Right ventricle myocardium inferior (tissue), 1 donor: ENCODE measurements at regions of chr4 and their contacts with region 1.

Region 1: GRCh38 chr4:148857239-148857972 is 415.2 kb upstream of the NR3C2 start:
- DNase-seq: no peak
- ATAC-seq: no peak

Region 2: DNA sequence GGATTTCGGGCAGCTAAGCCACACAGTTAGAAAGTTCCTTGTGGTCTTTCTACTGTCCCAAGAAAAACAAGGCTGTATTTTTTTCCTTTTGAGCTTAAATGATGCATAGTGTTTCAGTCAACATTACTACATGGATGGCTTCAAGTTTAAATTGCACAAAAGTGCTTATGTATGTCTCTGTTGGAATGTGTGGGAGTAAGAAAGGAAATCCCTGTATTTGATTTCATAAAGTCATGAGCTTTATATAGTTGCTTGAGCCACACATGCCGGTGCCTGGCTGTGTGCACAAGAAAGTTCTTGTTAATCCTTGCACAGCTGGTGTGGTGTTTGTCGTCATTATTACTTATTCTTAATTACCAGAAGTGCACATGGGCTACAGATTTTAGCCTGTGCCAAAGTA is 863.3 kb before region 1 on chr4:
- intact Hi-C with region 1: no loop called
- DNase-seq: no peak
- ATAC-seq: no peak

Region 3: GRCh38 chr4:148288448-148288847 is 569.0 kb before region 1 on chr4:
- intact Hi-C with region 1: loop called (anchors 10 kb)
- DNase-seq: peak; percentile 70
- ATAC-seq: peak; percentile 73